Gastrocnemius medialis (tissue), 4 donors: ENCODE measurements at regions of chr16 and their contacts with region 1.

Region 1: GRCh38 chr16:1420111-1420540 is 421 bp downstream of the UQCC4 start:
- DNase-seq: peak in 1 of 2 donors; percentile 71
- ATAC-seq: peak; percentile 17 to 20
- H3K4me3 ChIP-seq: peak overlapping the region; percentile 95 to 99 (median 96)
- H3K27ac ChIP-seq: peak overlapping the region; percentile 85 to 99 (median 90)
- H3K4me1 ChIP-seq: peaks cover 25 to 38% of the 10 kb centered on the region in 2 donors
- H3K27me3 ChIP-seq: no peaks in the 10 kb centered on the region
- CTCF ChIP-seq: no peak
- POLR2A ChIP-seq: no peak

Region 2: DNA sequence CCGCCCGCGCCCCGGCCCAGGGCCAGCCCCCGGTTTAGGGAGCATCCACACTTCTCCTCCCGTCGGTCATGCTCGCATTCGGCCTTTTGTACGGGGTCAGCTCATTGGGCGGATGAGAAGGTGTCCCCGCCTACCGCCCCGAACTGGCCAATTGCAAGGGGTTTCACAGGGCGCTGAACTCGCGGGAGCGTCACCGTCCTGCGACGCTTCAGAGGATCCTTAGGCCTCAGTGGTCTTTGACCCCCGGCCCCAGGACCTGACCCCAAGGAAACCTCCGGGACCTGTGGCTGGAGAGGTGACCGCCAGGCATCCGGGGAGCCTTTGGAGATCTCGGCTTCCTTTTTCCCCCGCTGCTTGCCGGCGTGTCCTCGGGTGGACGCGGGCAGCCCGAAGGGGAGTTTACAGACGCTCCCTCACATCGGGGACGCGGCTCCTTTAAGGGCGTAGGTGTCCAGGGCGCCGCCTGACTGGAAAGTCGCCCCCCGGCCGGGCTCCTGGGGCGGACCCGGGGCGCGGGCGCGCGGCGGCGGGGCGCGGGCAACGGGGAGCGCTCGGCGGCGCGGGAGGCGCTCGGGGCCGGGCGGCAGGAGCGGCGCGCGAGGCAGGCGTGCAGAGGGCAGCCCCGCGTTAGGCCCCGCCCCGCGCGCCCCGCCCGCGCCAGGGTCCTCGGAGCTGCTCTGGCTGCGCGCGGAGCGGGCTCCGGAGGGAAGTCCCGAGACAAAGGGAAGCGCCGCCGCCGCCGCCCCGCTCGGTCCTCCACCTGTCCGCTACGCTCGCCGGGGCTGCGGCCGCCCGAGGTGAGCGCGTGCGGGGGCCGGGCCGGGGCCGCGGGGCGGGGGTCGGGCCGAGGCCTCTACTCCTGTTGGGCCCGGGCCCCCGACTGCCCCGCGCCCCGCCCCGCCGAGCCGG is 110.9 kb before region 1 on chr16 and contains the start of gene UBE2I:
- in situ Hi-C with region 1: no loop called
- intact Hi-C with region 1: loop called (anchors 5 kb)
- DNase-seq: peak; percentile 94 to 96
- ATAC-seq: peak; percentile 91
- H3K4me3 ChIP-seq: peak within 1 kb of the TSS; percentile 67 to 95 (median 80)
- H3K27ac ChIP-seq: peak within 1 kb of the TSS; percentile 91 to 99 (median 96)
- H3K4me1 ChIP-seq: peaks cover 30 to 44% of the 10 kb centered on the region in 2 donors
- H3K27me3 ChIP-seq: no peaks in the 10 kb centered on the region
- CTCF ChIP-seq: no peak
- POLR2A ChIP-seq: peak; percentile 57 to 76
- total RNA-seq, gene UBE2I: 28.9 to 80.4 (median 41.7) TPM

Region 3: GRCh38 chr16:1385232-1385631 is 34.9 kb before region 1 on chr16:
- in situ Hi-C with region 1: no loop called
- intact Hi-C with region 1: no loop called
- DNase-seq: no peak
- ATAC-seq: no peak
- H3K4me3 ChIP-seq: no peak overlapping the region
- H3K27ac ChIP-seq: no peak overlapping the region
- H3K4me1 ChIP-seq: no peaks in the 10 kb centered on the region
- H3K27me3 ChIP-seq: no peaks in the 10 kb centered on the region
- CTCF ChIP-seq: no peak
- POLR2A ChIP-seq: no peak

Region 4: DNA sequence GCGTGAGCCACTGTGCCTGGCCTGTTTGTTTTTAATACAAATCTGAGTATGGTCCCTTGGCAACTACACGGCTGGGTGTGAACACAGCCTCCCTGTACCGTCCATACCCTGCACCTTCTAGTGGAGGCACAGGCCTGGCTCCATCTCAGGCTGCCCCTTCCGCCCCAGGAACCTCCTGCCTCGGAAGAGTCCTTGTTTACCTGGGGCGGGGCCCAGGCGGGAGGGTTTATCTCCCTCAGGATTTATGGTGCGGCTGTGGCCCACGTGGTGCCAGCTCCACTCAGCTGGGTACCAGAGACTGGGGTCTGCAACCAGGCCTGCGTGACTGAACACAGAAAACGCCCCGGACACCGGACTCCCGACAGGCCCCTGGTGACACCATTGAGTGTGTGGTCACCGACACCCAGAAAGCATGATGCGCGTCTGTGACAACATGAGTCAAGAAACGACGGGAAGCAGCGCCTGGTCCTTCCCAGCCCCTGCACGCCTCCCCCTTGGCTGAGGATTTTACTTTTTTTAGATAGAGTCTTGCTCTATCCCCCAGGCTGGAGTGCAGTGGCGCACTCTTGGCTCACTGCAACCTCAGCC is 24.6 kb before region 1 on chr16:
- in situ Hi-C with region 1: no loop called
- intact Hi-C with region 1: no loop called
- DNase-seq: no peak
- ATAC-seq: no peak
- H3K4me3 ChIP-seq: no peak overlapping the region
- H3K27ac ChIP-seq: no peak overlapping the region
- H3K4me1 ChIP-seq: no peaks in the 10 kb centered on the region
- H3K27me3 ChIP-seq: no peaks in the 10 kb centered on the region
- CTCF ChIP-seq: no peak
- POLR2A ChIP-seq: no peak

Region 5: DNA sequence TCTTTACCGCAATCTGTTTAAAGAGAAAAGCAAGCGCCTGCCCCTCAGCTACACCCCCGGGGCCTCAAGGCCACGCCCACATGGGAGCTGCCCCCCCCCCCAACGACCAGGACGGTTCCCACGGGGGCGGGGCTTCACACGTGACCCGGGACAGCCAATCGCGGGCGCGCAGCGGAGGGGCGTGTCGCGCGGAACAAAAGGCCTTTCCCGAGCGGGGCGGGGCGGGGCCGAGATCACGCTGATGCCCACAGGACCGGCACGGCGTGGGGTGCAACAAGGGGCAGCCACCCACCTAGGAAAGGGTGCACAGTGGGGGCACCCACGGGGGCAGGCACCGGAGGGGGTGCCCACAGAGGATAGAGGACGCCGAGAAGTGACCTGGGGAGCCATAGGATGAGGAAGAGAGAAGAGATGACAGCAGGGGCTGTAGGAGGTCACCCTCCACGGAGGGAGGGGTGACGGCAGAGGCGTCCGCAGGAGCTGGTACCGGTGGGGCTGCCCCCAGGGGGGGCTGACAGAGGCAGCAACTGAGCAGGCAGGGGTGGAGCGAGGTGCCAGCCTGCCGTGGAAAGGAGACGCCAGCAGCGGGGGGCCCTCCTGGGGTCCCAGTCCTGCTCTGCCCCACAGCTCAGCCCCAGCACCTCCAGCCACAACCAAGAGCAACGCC is 11.8 kb before region 1 on chr16:
- in situ Hi-C with region 1: no loop called
- intact Hi-C with region 1: loop called (anchors 1 kb)
- DNase-seq: peak; percentile 84 to 91
- ATAC-seq: peak; percentile 90 to 94
- H3K4me3 ChIP-seq: peak overlapping the region; percentile 49 to 66 (median 59)
- H3K27ac ChIP-seq: peak overlapping the region; percentile 51 to 75 (median 66)
- H3K4me1 ChIP-seq: peaks cover 7 to 18% of the 10 kb centered on the region in 2 donors
- H3K27me3 ChIP-seq: no peaks in the 10 kb centered on the region
- CTCF ChIP-seq: no peak
- POLR2A ChIP-seq: no peak

Region 6: GRCh38 chr16:1492923-1493745 is 73.0 kb after region 1 on chr16 and contains the start of gene TELO2:
- in situ Hi-C with region 1: no loop called
- intact Hi-C with region 1: loop called (anchors 2 kb)
- DNase-seq: peak; percentile 64 to 68
- ATAC-seq: peak; percentile 87
- H3K4me3 ChIP-seq: peak within 1 kb of the TSS; percentile 78 to 95 (median 83)
- H3K27ac ChIP-seq: peak within 1 kb of the TSS; percentile 84 to 98 (median 92)
- H3K4me1 ChIP-seq: peaks cover 15 to 20% of the 10 kb centered on the region in 2 donors
- H3K27me3 ChIP-seq: no peaks in the 10 kb centered on the region
- CTCF ChIP-seq: no peak
- POLR2A ChIP-seq: peak; percentile 27 to 53
- total RNA-seq, gene TELO2: 2.9 to 11.2 (median 9.8) TPM

Region 7: DNA sequence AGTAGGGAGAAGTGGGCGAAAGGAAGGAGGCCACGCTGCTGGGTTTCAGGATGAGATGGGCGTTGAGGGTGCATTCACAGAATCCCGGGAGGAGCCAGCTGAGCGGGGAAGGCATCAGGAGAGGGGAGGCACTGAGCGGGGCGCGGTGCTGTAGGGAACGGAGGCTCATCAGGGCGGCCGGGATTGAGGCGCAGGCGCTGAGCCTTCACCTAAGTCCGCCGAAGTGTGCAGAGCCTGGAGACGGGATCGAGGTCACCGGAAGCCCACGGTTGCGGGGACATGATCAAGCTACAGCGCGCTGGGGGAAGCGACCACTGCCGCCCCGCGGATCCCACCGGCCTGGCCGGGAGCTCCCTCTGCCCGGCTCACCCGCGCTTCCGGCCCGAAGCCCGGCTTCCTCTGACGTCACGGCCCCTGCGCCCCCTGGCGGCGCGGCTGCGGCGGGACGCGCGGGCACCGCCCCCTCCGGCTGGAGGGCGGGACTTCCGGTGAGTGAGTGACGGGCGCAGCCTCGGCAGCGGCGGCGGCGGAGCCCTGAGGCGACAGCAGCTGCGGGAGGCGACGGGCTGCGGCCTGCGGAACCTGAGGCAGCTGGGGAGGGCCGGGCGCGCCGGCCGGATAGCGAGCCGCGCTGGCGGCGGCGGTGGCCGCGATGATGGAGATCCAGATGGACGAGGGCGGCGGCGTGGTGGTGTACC is 285.7 kb after region 1 on chr16 and contains the start of gene MAPK8IP3:
- in situ Hi-C with region 1: no loop called
- intact Hi-C with region 1: loop called (anchors 5 kb)
- DNase-seq: peak; percentile 75 to 88
- ATAC-seq: peak; percentile 86 to 91
- H3K4me3 ChIP-seq: peak within 1 kb of the TSS; percentile 85 to 96 (median 88)
- H3K27ac ChIP-seq: peak within 1 kb of the TSS; percentile 89 to 94 (median 92)
- H3K4me1 ChIP-seq: peaks cover 28 to 31% of the 10 kb centered on the region in 2 donors
- H3K27me3 ChIP-seq: no peaks in the 10 kb centered on the region
- CTCF ChIP-seq: peak; percentile 68 to 100 (median 100)
- POLR2A ChIP-seq: peak; percentile 97 to 99
- total RNA-seq, gene MAPK8IP3: 6.5 to 22.6 (median 13.9) TPM

Region 8: GRCh38 chr16:1826691-1827575 is 406.8 kb after region 1 on chr16 and contains the starts of genes FAHD1 and HAGH:
- in situ Hi-C with region 1: no loop called
- intact Hi-C with region 1: loop called (anchors 5 kb)
- DNase-seq: peak; percentile 92 to 93
- ATAC-seq: peak; percentile 92
- H3K4me3 ChIP-seq: peak within 1 kb of the TSS; percentile 74 to 99 (median 89)
- H3K27ac ChIP-seq: peak within 1 kb of the TSS; percentile 83 to 99 (median 92)
- H3K4me1 ChIP-seq: peaks cover 56 to 60% of the 10 kb centered on the region in 2 donors
- H3K27me3 ChIP-seq: no peaks in the 10 kb centered on the region
- CTCF ChIP-seq: peak in 2 of 5 experiments; percentile 33 to 37
- POLR2A ChIP-seq: peak; percentile 68 to 70
- total RNA-seq, gene FAHD1: 28.2 to 57.1 (median 49.1) TPM
- total RNA-seq, gene HAGH: 216 to 440 (median 261) TPM